WTC11 (cell line): ENCODE measurements at regions of chr20 and their contacts with region 1.

Region 1: DNA sequence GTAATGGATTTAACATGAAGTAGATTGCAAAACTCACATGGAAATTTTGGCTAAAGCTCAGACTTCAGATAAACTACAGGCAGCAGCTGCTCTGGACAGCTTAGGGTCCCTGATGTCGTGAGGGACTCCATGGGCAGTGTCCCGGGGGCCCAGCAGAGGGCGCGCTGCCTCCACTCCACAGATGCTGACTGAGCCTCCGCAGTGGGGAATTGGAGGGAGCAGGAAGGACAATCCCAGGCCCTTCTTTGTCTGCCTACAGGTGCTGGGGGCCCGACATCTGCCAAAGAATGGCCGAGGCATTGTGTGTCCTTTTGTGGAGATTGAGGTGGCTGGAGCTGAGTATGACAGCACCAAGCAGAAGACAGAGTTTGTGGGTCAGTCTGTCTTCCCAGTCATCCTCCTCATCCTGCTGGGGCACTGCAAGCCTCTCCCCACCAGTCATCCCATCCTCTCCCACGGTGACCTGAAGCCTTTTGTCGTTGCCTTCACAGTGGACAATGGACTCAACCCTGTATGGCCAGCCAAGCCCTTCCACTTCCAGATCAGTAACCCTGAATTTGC is 35.9 kb downstream of the PLCG1 start:
- DNase-seq: peak; percentile 86
- ATAC-seq: peak; percentile 94
- H3K4me3 Mint-ChIP-seq: no peak overlapping the region
- H3K27ac Mint-ChIP-seq: no peak overlapping the region
- H3K4me1 Mint-ChIP-seq: peaks cover 3% of the 10 kb centered on the region
- H3K27me3 Mint-ChIP-seq: no peaks in the 10 kb centered on the region
- CTCF ChIP-seq: peak; percentile 95

Region 2: GRCh38 chr20:41086402-41087338 is 86.6 kb before region 1 on chr20:
- CTCF ChIA-PET with region 1: no interaction called
- POLR2A ChIA-PET with region 1: no interaction called
- DNase-seq: no peak
- ATAC-seq: no peak
- H3K4me3 Mint-ChIP-seq: no peak overlapping the region
- H3K27ac Mint-ChIP-seq: no peak overlapping the region; the same call in none of the 2 replicates
- H3K4me1 Mint-ChIP-seq: peaks cover 10% of the 10 kb centered on the region
- H3K27me3 Mint-ChIP-seq: no peaks in the 10 kb centered on the region
- CTCF ChIP-seq: no peak

Region 3: GRCh38 chr20:41136680-41137613 is 36.3 kb before region 1 on chr20 and contains the start of gene PLCG1:
- CTCF ChIA-PET with region 1: interaction called, 41 read pairs
- POLR2A ChIA-PET with region 1: interaction called, 3 read pairs
- DNase-seq: peak; percentile 92
- ATAC-seq: peak; percentile 67
- H3K4me3 Mint-ChIP-seq: peak within 1 kb of the TSS; percentile 89
- H3K27ac Mint-ChIP-seq: peak within 1 kb of the TSS; percentile 83
- H3K4me1 Mint-ChIP-seq: peaks cover 50% of the 10 kb centered on the region
- H3K27me3 Mint-ChIP-seq: peaks cover 13% of the 10 kb centered on the region
- CTCF ChIP-seq: no peak
- total RNA-seq, gene PLCG1: 177 to 201 TPM (median 194 TPM) in 3 replicates

Region 4: GRCh38 chr20:41158082-41158645 is 15.1 kb before region 1 on chr20:
- CTCF ChIA-PET with region 1: interaction called, 20 read pairs
- POLR2A ChIA-PET with region 1: no interaction called
- DNase-seq: no peak
- ATAC-seq: no peak
- H3K4me3 Mint-ChIP-seq: no peak overlapping the region
- H3K27ac Mint-ChIP-seq: peak overlapping the region; percentile 88
- H3K4me1 Mint-ChIP-seq: peaks cover 45% of the 10 kb centered on the region
- H3K27me3 Mint-ChIP-seq: no peaks in the 10 kb centered on the region
- CTCF ChIP-seq: no peak

Region 5: GRCh38 chr20:41191562-41192500 is 18.6 kb after region 1 on chr20:
- CTCF ChIA-PET with region 1: interaction called, 14 read pairs
- POLR2A ChIA-PET with region 1: no interaction called
- DNase-seq: no peak
- ATAC-seq: no peak
- H3K4me3 Mint-ChIP-seq: no peak overlapping the region
- H3K27ac Mint-ChIP-seq: no peak overlapping the region
- H3K4me1 Mint-ChIP-seq: no peaks in the 10 kb centered on the region
- H3K27me3 Mint-ChIP-seq: no peaks in the 10 kb centered on the region; the same call in 1 of the 2 replicates
- CTCF ChIP-seq: no peak

Region 6: DNA sequence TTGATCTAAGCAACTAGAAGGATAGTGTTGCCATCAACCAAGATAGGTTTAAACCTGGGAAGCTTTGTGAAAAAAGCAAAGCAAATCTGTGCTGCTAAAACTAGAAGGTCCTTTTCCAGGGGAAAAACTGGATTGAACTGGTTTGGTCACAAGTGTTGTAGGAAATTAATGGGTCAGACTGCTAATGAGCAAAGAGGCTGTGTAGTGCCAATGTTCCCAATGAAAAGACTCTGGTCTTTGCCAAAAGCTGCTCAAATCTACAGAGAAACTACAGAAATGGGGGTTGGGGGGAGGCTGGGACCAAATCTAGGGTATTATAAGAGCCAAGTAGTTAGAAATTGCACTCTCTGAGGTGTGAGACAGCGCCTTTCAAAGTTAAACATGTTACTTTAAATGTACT is 49.1 kb after region 1 on chr20:
- CTCF ChIA-PET with region 1: interaction called, 14 read pairs
- POLR2A ChIA-PET with region 1: no interaction called
- DNase-seq: no peak
- ATAC-seq: no peak
- H3K4me3 Mint-ChIP-seq: no peak overlapping the region
- H3K27ac Mint-ChIP-seq: no peak overlapping the region
- H3K4me1 Mint-ChIP-seq: no peaks in the 10 kb centered on the region
- H3K27me3 Mint-ChIP-seq: no peaks in the 10 kb centered on the region
- CTCF ChIP-seq: no peak

Region 7: DNA sequence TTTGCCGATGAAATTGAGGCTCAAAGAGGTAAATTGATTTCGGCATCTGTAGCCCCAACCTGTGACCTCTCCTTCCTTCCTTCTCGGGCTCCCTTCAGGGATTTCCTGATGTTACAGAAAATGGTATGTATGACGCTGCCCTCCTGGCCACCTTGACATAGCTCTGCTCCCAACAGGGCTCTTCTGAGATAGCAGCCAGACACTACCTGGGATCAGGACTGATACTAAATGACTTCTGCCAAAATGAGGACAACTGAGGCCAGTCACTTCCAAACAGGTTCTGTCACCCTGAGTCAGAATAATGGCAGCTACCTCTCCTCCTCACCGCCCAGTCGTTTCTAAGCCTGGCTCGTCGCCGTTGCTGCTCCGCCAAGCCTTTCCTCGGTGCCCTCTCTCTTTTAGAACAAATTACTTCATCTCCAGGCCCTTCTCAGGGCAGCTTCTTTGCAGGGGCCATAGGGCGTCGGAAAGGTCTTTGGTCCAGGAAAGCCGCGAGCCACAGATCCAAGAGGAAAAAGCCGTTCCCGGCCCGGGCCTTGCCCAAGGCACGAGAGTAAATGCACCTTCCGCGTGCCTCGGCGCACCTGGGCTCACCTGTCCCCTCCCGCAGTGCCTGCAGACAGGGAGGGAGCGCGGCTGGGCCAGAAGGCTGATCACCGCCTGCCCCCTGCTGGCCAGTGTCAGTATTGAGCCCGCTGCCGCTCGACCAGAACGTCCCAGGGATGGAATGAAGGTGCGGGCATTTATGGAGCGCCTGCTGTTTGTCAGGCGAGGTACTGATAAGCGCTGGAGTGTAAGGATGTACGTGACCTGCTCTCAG is 166.5 kb after region 1 on chr20:
- CTCF ChIA-PET with region 1: interaction called, 126 read pairs
- POLR2A ChIA-PET with region 1: no interaction called
- DNase-seq: peak; percentile 98
- ATAC-seq: peak; percentile 77
- H3K4me3 Mint-ChIP-seq: peak overlapping the region; percentile 80
- H3K27ac Mint-ChIP-seq: peak overlapping the region; percentile 92
- H3K4me1 Mint-ChIP-seq: peaks cover 6% of the 10 kb centered on the region
- H3K27me3 Mint-ChIP-seq: peaks cover 8% of the 10 kb centered on the region
- CTCF ChIP-seq: peak; percentile 99

Region 8: DNA sequence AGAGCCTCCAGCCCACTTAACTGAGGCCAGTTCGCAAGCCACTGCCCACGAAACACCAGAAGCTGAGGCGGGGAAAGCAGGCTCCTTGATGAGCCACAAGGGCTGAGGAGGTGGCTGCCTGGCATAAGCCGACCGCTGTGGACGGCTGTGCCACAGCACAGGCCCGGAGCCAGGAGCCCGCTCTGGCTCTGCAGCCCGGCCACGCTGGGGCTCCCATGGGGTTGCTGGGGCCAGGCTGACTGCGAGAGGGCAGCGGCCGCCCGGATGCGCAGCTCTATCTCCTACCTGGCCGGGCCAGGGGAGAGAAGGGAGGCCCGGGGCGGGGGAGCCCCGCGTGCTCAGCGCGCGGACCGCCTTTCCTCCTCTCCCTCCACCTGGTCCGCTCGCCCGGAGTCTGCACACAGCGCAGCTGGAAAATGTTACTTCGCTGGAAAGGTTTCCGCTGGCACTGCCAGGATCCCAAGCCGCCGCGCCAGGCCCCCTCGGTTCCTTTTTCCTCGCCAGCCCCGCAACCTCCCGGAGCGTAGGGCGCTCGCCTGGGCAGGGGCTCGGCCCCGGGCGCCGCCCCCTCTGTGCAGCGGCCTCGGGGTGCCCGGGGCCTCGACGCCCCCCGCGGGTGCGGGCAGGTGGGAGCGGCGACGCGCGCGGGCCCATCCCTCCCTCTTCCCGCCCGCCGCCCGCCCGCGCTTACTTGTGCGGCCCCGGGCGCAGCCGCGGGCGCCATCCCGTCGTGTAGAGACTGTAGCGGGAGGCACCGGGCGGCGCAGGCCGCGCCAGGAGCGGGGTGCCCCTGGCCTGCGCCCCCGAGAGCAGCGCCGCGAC is 192.7 kb after region 1 on chr20:
- CTCF ChIA-PET with region 1: interaction called, 13 read pairs
- POLR2A ChIA-PET with region 1: no interaction called
- DNase-seq: peak; percentile 44
- ATAC-seq: peak; percentile 58
- H3K4me3 Mint-ChIP-seq: peak overlapping the region; percentile 58
- H3K27ac Mint-ChIP-seq: no peak overlapping the region
- H3K4me1 Mint-ChIP-seq: peaks cover 12% of the 10 kb centered on the region
- H3K27me3 Mint-ChIP-seq: peaks cover 51% of the 10 kb centered on the region
- CTCF ChIP-seq: no peak